ENCODE measurements at regions of chr1 and their contacts with region 1.

Region 1: GRCh38 chr1:176559878-176560277 is 96.9 kb downstream of the PAPPA2 start:
- DNase-seq: peak; percentile 75
- H3K4me3 ChIP-seq: no peak overlapping the region
- H3K27ac ChIP-seq: peak overlapping the region in 1 of 4 donors; percentile 3
- H3K4me1 ChIP-seq: peaks cover 0 to 12% (median 10%) of the 10 kb centered on the region in 4 donors
- H3K27me3 ChIP-seq: no peaks in the 10 kb centered on the region
- CTCF ChIP-seq: peak; percentile 69 to 88 (median 80)
- EP300 ChIP-seq: no peak
- POLR2A ChIP-seq: no peak

Region 2: GRCh38 chr1:176374967-176375569 is 184.8 kb before region 1 on chr1:
- intact Hi-C with region 1: loop called (anchors 5 kb)
- DNase-seq: peak; percentile 80
- H3K4me3 ChIP-seq: no peak overlapping the region
- H3K27ac ChIP-seq: no peak overlapping the region
- H3K4me1 ChIP-seq: no peaks in the 10 kb centered on the region
- H3K27me3 ChIP-seq: no peaks in the 10 kb centered on the region
- CTCF ChIP-seq: peak; percentile 34 to 83 (median 73)
- EP300 ChIP-seq: no peak
- POLR2A ChIP-seq: no peak

Region 3: DNA sequence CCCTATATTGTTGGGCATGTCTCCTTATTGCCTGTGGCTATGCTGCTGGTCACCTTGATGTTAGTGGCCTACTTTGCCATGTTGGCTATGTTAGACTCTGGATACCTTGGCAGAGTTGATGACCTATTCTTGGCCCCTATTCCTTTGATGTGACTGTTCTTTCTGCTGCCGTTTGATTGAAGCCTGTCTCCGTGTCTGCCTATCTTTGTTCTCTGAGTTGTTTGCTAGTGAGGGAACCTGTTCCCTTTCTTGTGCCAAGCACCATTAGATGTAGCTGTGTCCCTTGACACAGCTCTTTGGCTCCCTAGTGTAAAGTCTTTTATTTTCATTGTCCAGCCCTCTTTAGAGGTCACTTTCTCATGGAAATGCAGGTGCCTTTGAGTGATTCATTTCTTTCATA is 125.6 kb before region 1 on chr1:
- intact Hi-C with region 1: no loop called
- DNase-seq: no peak
- H3K4me3 ChIP-seq: no peak overlapping the region
- H3K27ac ChIP-seq: no peak overlapping the region
- H3K4me1 ChIP-seq: peaks cover 0 to 11% (median 0%) of the 10 kb centered on the region in 4 donors
- H3K27me3 ChIP-seq: no peaks in the 10 kb centered on the region
- CTCF ChIP-seq: no peak
- EP300 ChIP-seq: no peak
- POLR2A ChIP-seq: no peak

Region 4: GRCh38 chr1:176691251-176692228 is 131.7 kb after region 1 on chr1:
- intact Hi-C with region 1: loop called (anchors 2 kb)
- DNase-seq: peak; percentile 69
- H3K4me3 ChIP-seq: no peak overlapping the region
- H3K27ac ChIP-seq: peak overlapping the region in 3 of 4 donors; percentile 73 to 87 (median 77)
- H3K4me1 ChIP-seq: peaks cover 0 to 58% (median 54%) of the 10 kb centered on the region in 4 donors
- H3K27me3 ChIP-seq: no peaks in the 10 kb centered on the region
- CTCF ChIP-seq: peak; percentile 31 to 68 (median 54)
- EP300 ChIP-seq: no peak
- POLR2A ChIP-seq: no peak

Region 5: DNA sequence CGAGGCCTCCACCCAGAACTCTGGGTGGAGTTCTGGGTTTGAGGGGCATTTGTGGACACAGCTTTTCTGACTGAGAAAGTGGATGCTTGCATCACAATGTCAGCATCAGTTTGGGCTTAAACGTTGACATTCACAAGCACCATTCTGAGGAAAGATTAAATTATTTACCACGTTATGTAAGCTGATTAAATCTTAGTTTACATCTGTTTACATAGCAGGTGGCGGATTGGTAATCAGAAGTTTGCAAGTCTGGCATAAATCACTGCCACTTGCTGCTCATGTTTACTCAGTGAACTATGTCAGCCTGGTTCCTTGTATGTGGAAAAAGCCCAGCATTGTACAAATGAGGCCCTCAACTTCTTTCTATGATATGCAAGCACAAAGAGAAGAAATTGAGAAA is 213.2 kb after region 1 on chr1:
- intact Hi-C with region 1: no loop called
- DNase-seq: no peak
- H3K4me3 ChIP-seq: no peak overlapping the region
- H3K27ac ChIP-seq: no peak overlapping the region
- H3K4me1 ChIP-seq: peaks cover 0 to 12% (median 3%) of the 10 kb centered on the region in 4 donors
- H3K27me3 ChIP-seq: no peaks in the 10 kb centered on the region
- CTCF ChIP-seq: no peak
- EP300 ChIP-seq: no peak
- POLR2A ChIP-seq: no peak

Region 6: DNA sequence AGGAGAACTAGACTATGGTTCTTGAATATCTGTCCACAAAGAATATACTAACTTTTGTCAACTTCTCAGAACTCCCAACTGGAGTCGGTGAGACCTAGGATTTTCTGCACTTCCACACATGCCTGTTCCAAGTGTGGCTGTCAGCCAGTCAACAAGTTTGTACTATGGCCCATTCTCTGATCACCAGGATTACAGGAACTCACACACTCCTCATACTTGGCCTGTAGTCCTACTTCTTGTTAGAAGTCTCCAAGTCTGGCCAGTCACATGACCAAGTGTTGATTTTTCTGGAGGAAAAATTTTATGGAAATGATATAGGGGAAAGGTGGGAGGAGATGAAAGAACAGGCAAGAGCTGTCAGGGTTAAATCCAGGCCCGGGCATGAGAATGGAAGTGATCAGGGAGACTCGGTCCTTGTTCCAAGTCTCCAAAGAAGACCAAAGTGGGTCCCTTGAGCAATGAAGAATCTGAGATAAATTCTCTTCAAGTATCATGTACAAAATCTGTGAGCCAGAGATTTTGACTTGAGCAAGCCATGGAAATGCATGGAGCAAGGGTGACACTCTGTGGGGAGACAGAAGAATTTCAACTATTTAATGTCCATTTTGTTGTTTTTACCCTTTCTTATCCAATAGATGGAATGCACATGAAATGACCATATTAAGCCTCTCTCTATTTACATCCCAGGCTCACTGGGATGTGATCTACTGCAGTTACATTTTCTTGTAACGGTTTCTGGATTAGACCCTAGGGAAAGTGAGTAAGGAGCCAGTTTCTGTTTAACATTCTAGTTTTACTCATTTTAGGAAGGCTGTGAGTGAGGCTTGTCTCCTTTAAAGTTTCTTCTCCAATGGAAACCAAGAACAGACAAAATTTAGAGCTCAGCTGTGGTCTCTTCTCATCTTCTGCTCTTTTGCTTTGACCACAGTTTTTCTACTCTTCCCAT is 283.7 kb after region 1 on chr1:
- intact Hi-C with region 1: loop called (anchors 1 kb)
- DNase-seq: no peak
- H3K4me3 ChIP-seq: no peak overlapping the region
- H3K27ac ChIP-seq: peak overlapping the region in 1 of 4 donors; percentile 74
- H3K4me1 ChIP-seq: peaks cover 0 to 49% (median 36%) of the 10 kb centered on the region in 4 donors
- H3K27me3 ChIP-seq: no peaks in the 10 kb centered on the region
- CTCF ChIP-seq: peak; percentile 28 to 63 (median 50)
- EP300 ChIP-seq: no peak
- POLR2A ChIP-seq: no peak

Region 7: GRCh38 chr1:176880954-176881595 is 321.2 kb after region 1 on chr1:
- intact Hi-C with region 1: loop called (anchors 1 kb)
- DNase-seq: peak; percentile 81
- H3K4me3 ChIP-seq: no peak overlapping the region
- H3K27ac ChIP-seq: no peak overlapping the region
- H3K4me1 ChIP-seq: peaks cover 0 to 6% (median 6%) of the 10 kb centered on the region in 4 donors
- H3K27me3 ChIP-seq: no peaks in the 10 kb centered on the region
- CTCF ChIP-seq: peak; percentile 57 to 90 (median 82)
- EP300 ChIP-seq: no peak
- POLR2A ChIP-seq: no peak